Calu3 (cell line): ENCODE measurements at regions of chr12 and their contacts with region 1.

Region 1: GRCh38 chr12:22544038-22544979 is at the start of gene C2CD5:
- DNase-seq: peak; percentile 96
- H3K4me3 Mint-ChIP-seq: peak within 1 kb of the TSS; percentile 93
- H3K27ac Mint-ChIP-seq: peak within 1 kb of the TSS; percentile 95
- H3K4me1 Mint-ChIP-seq: peaks cover 33% of the 10 kb centered on the region
- H3K27me3 Mint-ChIP-seq: no peaks in the 10 kb centered on the region
- CTCF ChIP-seq: peak; percentile 15
- total RNA-seq, gene C2CD5: 28.8 and 29.5 TPM in 2 replicates

Region 2: GRCh38 chr12:22562036-22563028 is 18.0 kb after region 1 on chr12:
- CTCF ChIA-PET with region 1: no interaction called
- intact Hi-C with region 1: no loop called
- DNase-seq: no peak
- H3K4me3 Mint-ChIP-seq: peak overlapping the region; percentile 29
- H3K27ac Mint-ChIP-seq: peak overlapping the region; percentile 34
- H3K4me1 Mint-ChIP-seq: peaks cover 24% of the 10 kb centered on the region
- H3K27me3 Mint-ChIP-seq: no peaks in the 10 kb centered on the region
- CTCF ChIP-seq: no peak

Region 3: GRCh38 chr12:22588817-22589216 is 44.5 kb after region 1 on chr12:
- CTCF ChIA-PET with region 1: interaction called, 3 read pairs
- intact Hi-C with region 1: loop called (anchors 5 kb)
- DNase-seq: peak; percentile 54
- H3K4me3 Mint-ChIP-seq: no peak overlapping the region
- H3K27ac Mint-ChIP-seq: peak overlapping the region; percentile 66
- H3K4me1 Mint-ChIP-seq: peaks cover 19% of the 10 kb centered on the region
- H3K27me3 Mint-ChIP-seq: no peaks in the 10 kb centered on the region
- CTCF ChIP-seq: no peak

Region 4: DNA sequence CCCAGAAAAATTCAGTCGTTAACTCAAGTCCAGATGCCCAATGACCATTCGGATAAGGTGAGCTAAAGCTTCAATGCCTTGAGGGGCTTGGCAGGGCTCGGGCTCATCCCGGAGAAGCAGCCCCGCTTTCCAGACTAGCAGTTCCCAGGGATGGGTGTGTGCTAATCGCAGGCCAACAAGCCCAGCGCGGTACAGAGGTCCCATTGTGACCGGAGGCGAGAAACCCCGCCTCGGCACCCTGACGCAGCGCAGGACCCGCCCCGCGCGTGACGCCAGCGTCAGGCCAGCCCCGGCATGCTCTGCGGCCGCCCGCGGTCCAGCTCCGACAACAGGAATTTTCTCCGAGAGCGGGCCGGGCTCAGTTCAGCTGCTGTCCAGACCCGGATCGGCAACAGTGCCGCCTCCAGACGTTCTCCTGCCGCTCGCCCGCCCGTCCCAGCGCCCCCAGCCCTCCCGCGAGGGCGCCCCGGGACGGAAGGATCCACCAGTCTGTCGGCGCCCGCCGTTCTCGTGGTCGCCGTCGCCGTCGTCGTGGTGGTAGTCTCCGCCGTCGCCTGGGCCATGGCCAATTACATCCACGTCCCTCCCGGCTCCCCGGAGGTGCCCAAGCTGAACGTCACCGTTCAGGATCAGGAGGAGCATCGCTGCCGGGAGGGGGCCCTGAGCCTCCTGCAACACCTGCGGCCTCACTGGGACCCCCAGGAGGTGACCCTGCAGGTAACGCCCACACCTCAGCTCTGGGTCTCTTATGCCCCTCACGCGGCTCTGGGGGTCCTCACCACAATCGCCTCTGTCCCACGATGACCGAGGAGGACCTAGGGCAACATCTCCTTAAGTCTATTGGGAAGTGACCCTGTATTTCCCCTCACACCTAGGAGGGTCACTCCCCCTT is 80.8 kb after region 1 on chr12 and contains the start of gene ETNK1:
- CTCF ChIA-PET with region 1: interaction called, 8 read pairs
- intact Hi-C with region 1: loop called (anchors 1 kb)
- DNase-seq: peak; percentile 98
- H3K4me3 Mint-ChIP-seq: peak within 1 kb of the TSS; percentile 92
- H3K27ac Mint-ChIP-seq: peak within 1 kb of the TSS; percentile 98
- H3K4me1 Mint-ChIP-seq: peaks cover 12% of the 10 kb centered on the region
- H3K27me3 Mint-ChIP-seq: no peaks in the 10 kb centered on the region
- CTCF ChIP-seq: no peak
- total RNA-seq, gene ETNK1: 124 and 131 TPM in 2 replicates

Region 5: DNA sequence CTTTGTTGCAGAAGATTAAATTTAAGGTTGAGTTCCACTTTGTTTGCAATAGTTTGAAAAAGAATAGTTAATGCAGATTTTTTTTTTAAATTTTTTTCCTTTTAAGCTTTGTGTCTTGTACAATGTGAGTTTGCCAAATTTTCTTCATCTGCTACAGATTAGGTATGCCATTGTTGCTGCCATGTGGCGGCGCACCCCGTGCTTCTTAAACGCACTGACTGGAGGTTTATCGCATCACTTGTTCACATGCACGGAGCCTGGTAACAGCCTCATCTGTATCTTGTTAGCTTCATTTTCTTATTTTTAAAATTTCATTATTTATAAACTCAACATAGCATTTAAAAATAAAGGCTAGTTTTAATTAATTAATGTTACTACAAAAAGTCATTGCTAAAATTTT is 124.1 kb after region 1 on chr12:
- CTCF ChIA-PET with region 1: no interaction called
- intact Hi-C with region 1: no loop called
- DNase-seq: no peak
- H3K4me3 Mint-ChIP-seq: no peak overlapping the region
- H3K27ac Mint-ChIP-seq: no peak overlapping the region
- H3K4me1 Mint-ChIP-seq: no peaks in the 10 kb centered on the region
- H3K27me3 Mint-ChIP-seq: no peaks in the 10 kb centered on the region
- CTCF ChIP-seq: no peak